ENCODE measurements at regions of chr4 and their contacts with region 1.

Region 1: DNA sequence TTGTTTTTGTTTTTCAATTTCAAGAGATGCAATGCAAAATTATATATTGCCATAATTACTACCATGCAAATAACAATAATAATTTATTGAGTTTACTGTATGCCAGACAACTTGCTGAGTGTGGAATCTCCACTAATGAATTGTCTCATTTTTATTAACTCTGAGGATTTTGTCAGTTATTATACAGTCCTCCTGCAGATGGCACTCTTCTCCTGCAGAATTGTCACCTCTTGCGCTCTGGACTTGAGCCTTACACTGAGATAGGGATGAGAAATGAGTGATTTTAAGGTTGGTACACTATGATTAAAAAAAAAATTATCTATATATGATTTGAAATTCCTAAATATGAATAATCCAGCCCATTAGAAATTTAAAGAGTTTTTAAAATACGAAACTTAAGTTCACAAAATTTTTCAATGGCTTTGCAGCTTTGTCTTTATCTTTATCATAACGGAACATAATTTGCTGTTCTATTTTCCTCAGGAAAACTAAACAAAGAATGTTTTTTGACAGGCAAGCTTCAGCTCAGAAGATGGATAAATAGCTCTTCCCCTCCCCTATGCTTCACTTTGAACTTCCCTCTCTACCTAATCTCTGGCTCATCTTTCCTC is 12.7 kb upstream of the PAQR3 start:
- DNase-seq: no peak
- H3K4me3 ChIP-seq: no peak overlapping the region
- H3K27ac ChIP-seq: no peak overlapping the region
- H3K4me1 ChIP-seq: no peaks in the 10 kb centered on the region
- H3K27me3 ChIP-seq: no peaks in the 10 kb centered on the region
- CTCF ChIP-seq: peak; percentile 61 to 79 (median 62)

Region 2: GRCh38 chr4:79042079-79042674 is 90.2 kb after region 1 on chr4:
- intact Hi-C with region 1: loop called (anchors 10 kb)
- DNase-seq: no peak
- H3K4me3 ChIP-seq: no peak overlapping the region
- H3K27ac ChIP-seq: no peak overlapping the region
- H3K4me1 ChIP-seq: no peaks in the 10 kb centered on the region
- H3K27me3 ChIP-seq: no peaks in the 10 kb centered on the region
- CTCF ChIP-seq: peak in 2 of 3 experiments; percentile 39 to 52

Region 3: GRCh38 chr4:79588689-79589088 is 636.7 kb after region 1 on chr4:
- intact Hi-C with region 1: loop called (anchors 10 kb)
- DNase-seq: no peak
- H3K4me3 ChIP-seq: no peak overlapping the region
- H3K27ac ChIP-seq: no peak overlapping the region
- H3K4me1 ChIP-seq: peaks cover 0 to 7% of the 10 kb centered on the region in 2 donors
- H3K27me3 ChIP-seq: no peaks in the 10 kb centered on the region
- CTCF ChIP-seq: no peak

Region 4: GRCh38 chr4:79678472-79679202 is 726.7 kb after region 1 on chr4:
- intact Hi-C with region 1: loop called (anchors 10 kb)
- DNase-seq: no peak
- H3K4me3 ChIP-seq: no peak overlapping the region
- H3K27ac ChIP-seq: peak overlapping the region in 1 of 2 donors; percentile 26
- H3K4me1 ChIP-seq: peaks cover 0 to 3% of the 10 kb centered on the region in 2 donors
- H3K27me3 ChIP-seq: no peaks in the 10 kb centered on the region
- CTCF ChIP-seq: no peak

Region 5: GRCh38 chr4:80215449-80216052 is 1263.6 kb after region 1 on chr4:
- intact Hi-C with region 1: loop called (anchors 2 kb)
- DNase-seq: no peak
- H3K4me3 ChIP-seq: no peak overlapping the region
- H3K27ac ChIP-seq: no peak overlapping the region
- H3K4me1 ChIP-seq: no peaks in the 10 kb centered on the region
- H3K27me3 ChIP-seq: no peaks in the 10 kb centered on the region
- CTCF ChIP-seq: peak; percentile 39 to 66 (median 49)